ENCODE measurements at regions of chr9 and their contacts with region 1.

Region 1: DNA sequence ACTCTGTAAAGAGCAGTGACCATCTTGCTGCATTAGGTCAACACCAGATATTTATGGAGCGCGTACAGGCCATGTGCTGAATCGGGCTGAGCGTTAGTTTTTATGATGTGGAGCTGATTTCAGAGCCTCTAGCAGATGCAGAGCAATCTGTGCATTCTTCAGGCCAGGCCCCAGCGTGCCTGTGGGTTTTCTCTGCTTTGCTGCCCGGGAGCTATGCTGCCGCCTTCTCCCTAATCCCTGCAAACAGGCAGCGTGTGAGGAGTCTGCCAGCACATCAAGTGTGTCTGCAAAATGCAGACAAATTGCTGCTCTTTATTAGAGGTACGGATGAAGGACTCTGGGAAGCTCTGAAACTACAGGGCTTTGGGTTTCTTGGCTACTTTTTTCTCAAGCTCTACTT is 170.0 kb downstream of the NTRK2 start:
- DNase-seq: no peak
- ATAC-seq: no peak
- H3K4me3 ChIP-seq: no peak overlapping the region
- H3K4me3 Mint-ChIP-seq: no peak overlapping the region
- H3K27ac ChIP-seq: no peak overlapping the region
- H3K27ac Mint-ChIP-seq: no peak overlapping the region
- H3K4me1 ChIP-seq: no peaks in the 10 kb centered on the region
- H3K4me1 Mint-ChIP-seq: no peaks in the 10 kb centered on the region
- H3K27me3 ChIP-seq: peaks cover 0 to 5% of the 10 kb centered on the region in 2 experiments
- H3K27me3 Mint-ChIP-seq: peaks cover 6 to 12% of the 10 kb centered on the region in 2 donors

Region 2: GRCh38 chr9:84858364-84858763 is 18.8 kb after region 1 on chr9:
- CTCF ChIA-PET with region 1: no interaction called
- POLR2A ChIA-PET with region 1: no interaction called
- DNase-seq: no peak
- ATAC-seq: no peak
- H3K4me3 ChIP-seq: no peak overlapping the region
- H3K4me3 Mint-ChIP-seq: no peak overlapping the region
- H3K27ac ChIP-seq: no peak overlapping the region
- H3K27ac Mint-ChIP-seq: no peak overlapping the region
- H3K4me1 ChIP-seq: no peaks in the 10 kb centered on the region
- H3K4me1 Mint-ChIP-seq: no peaks in the 10 kb centered on the region
- H3K27me3 ChIP-seq: no peaks in the 10 kb centered on the region
- H3K27me3 Mint-ChIP-seq: peaks cover 5 to 8% of the 10 kb centered on the region in 2 donors

Region 3: GRCh38 chr9:85368781-85369180 is 529.2 kb after region 1 on chr9:
- CTCF ChIA-PET with region 1: interaction called in 1 of 2 experiments, 11 read pairs
- POLR2A ChIA-PET with region 1: no interaction called
- DNase-seq: no peak
- ATAC-seq: no peak
- H3K4me3 ChIP-seq: no peak overlapping the region
- H3K4me3 Mint-ChIP-seq: no peak overlapping the region
- H3K27ac ChIP-seq: no peak overlapping the region
- H3K27ac Mint-ChIP-seq: no peak overlapping the region
- H3K4me1 ChIP-seq: no peaks in the 10 kb centered on the region
- H3K4me1 Mint-ChIP-seq: no peaks in the 10 kb centered on the region
- H3K27me3 ChIP-seq: no peaks in the 10 kb centered on the region
- H3K27me3 Mint-ChIP-seq: peaks cover 1 to 3% of the 10 kb centered on the region in 2 donors

Measured in T-cell (primary cell).